ENCODE measurements at regions of chr5 and their contacts with region 1.

Region 1: GRCh38 chr5:54062958-54063357 is 247.4 kb downstream of the ARL15 start:
- DNase-seq: peak; percentile 46
- H3K4me3 ChIP-seq: no peak overlapping the region
- H3K27me3 ChIP-seq: no peaks in the 10 kb centered on the region
- CTCF ChIP-seq: no peak

Region 2: DNA sequence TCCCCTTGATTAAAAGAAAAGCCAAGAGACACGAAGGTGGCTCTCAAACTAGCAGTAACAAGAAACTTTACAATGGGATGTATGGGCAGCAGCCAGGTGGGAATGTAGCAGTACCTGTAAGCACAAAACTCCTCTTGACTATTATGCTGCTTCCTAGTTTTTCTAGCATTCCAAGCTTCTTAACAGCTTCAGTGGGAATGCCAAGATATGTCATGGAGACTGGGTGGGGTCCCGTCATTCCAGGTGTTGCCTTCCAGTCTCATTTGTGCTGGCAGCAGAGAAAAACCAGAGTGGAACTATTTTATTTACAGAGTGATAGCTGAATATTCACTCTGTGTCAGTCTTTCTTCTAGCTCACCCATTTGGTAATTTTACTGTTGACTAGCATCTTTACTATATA is 10.8 kb after region 1 on chr5:
- CTCF ChIA-PET with region 1: no interaction called
- POLR2A ChIA-PET with region 1: interaction called, 10 read pairs
- DNase-seq: no peak
- H3K4me3 ChIP-seq: no peak overlapping the region
- H3K27me3 ChIP-seq: no peaks in the 10 kb centered on the region
- CTCF ChIP-seq: no peak